Head of caudate nucleus (tissue), 42 donors: ENCODE measurements at regions of chr1 and their contacts with region 1.

Region 1: DNA sequence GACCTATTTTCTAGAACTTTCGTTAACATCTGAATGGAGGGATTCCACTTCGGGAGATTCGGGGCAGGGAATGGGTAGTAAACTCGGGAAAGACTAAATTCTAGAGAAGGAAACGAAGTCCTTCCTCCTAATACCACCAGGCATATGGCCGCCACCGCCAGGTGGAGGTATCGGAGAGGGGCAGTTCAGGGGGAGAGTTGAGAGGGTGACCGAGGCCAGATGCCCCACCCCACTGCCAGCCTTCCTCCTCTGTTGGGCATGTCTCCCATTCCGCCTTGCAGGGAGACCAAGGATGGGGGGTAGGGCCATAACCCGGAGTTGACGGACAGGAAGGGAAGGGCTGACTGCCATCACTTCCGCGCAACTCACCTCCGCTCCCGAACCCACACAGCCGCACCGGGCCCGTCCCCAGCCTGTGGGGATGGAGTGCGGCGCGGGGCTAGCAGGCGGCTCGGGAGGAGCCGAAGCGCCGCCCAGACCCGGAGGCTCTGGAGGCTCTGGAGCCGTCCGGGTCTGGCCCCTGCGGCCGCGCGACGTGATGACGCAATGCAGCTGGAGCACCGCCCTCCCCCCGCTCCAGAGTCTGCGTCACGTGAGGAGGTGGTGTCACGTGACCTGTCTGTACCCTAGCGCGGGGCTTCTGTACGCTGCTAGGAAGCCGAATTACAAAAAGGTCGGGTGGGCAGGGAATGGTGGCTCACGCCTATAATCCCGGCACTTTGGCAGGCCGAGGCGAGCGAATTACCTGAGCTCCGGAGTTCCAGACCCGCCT is at the start of gene KLHL12:
- DNase-seq: peak; percentile 92 to 99 (median 97)

Region 2: GRCh38 chr1:202888531-202889360 is 38.2 kb before region 1 on chr1 and contains the start of gene RABIF:
- intact Hi-C with region 1: loop called (anchors 2 kb)
- DNase-seq: peak; percentile 91 to 98 (median 96)

Region 3: DNA sequence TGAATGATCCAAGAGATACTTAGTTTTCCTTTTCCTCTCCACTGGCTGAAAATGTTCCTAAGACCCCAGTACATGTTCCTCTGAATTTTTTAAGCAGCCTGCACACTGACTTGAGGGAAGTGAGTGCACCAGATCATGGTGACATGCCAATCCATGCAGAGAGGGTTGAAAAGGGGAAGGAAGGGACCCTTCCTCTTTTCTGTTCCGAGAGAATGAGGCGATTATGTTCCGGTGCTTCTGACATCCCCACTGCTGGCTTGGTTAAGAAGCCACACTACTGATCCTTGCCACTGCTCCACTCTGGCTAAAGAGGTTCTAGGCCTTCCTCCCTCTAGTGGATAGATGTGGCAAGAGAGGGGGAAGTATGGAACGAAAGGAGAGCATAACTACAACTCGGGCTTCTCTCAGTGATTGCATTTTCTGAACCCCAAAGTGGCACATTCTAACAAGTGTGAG is 42.0 kb after region 1 on chr1:
- intact Hi-C with region 1: loop called (anchors 5 kb)
- DNase-seq: peak in 36 of 42 donors; percentile 8 to 77 (median 46)